Dendritic cell treated with granulocyte-macrophage colony-stimulating factor and Interleukin-4, amounts not matched to agents 40 ng/mL and 50 ng/mL, for 4 days (primary cell): ENCODE measurements at regions of chr18 and their contacts with region 1.

Region 1: DNA sequence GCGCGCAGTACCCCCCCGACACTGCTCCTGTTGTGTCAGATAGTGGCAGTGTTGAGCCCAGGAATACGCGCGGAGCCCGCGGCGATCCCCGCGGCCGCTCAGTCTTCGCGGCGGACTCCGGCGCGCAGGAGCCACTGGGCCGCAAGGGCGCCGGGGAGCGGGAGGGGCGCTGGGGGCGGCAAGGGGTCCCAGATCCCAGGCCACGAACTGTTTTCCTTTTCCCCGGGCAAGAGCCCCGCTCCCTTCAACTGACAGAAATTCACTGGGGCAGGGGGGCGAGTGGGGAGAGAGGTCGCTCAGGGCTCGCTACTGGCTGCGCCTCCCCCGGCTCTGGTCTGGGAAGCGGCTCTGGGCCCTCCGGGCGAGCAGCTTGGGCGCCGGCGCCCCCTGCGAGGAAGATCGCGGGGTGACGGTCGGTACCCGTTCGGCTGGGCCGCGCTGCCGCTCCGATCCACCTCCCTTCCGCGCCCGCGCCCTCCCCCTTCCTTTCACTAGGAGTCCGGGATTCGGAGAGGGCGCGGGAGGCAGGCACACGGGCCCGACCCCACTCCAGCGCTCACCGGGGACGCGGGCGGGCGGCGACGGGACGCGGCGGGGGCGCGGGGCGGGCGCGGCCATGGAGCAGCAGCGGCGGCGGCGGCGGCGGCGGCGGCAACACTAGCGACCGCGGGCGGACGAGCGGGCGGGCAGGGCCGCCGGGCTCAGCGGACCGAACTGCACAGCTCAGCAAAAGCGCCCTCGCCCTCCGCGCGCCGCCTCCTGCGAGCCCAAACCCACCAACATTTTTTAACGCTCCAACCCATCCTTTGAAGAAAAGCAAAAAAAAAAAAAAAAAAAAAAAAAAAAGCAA is 1.4 kb upstream of the SETBP1 start:
- H3K4me3 Mint-ChIP-seq: peak overlapping the region; percentile 76
- H3K27ac Mint-ChIP-seq: peak overlapping the region; percentile 52
- H3K4me1 Mint-ChIP-seq: no peaks in the 10 kb centered on the region
- H3K27me3 Mint-ChIP-seq: peaks cover 23% of the 10 kb centered on the region

Region 2: GRCh38 chr18:43442571-43442970 is 1236.7 kb before region 1 on chr18:
- intact Hi-C with region 1: no loop called
- H3K4me3 Mint-ChIP-seq: no peak overlapping the region
- H3K27ac Mint-ChIP-seq: no peak overlapping the region
- H3K4me1 Mint-ChIP-seq: no peaks in the 10 kb centered on the region
- H3K27me3 Mint-ChIP-seq: no peaks in the 10 kb centered on the region

Region 3: DNA sequence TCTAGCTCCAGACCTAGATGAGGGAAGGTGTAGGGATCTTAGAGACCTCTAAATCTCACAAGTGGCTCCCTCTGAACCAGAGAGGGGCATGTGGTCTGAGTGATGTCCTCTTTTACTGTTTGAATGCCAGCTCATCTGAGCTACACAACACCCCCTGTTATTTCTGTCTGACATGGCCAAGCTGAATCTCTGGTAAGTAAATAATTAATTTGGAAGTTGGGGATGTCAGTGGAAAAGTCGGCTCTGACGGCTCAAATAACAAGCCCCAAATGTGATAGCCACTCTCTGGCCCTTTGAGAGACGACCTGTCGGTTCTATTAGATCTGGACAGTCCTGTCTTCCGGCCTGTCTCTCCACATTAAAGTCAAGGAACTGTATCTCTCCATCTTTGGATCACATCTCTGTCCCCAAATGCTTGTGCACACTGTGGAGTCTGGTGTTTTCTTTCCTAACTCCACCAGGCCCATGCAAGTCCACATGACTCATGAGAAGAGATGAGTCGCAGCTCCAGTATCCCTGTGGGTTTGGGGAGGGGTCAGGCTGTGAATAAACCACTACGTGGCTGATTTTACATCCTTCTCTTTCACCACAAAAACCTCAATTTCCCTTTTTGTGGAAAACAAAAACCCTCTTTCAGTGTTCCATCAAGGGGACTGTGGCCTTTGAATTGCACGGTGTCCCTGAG is 53.9 kb after region 1 on chr18:
- intact Hi-C with region 1: loop called (anchors 10 kb)
- H3K4me3 Mint-ChIP-seq: no peak overlapping the region
- H3K27ac Mint-ChIP-seq: no peak overlapping the region
- H3K4me1 Mint-ChIP-seq: peaks cover 60% of the 10 kb centered on the region
- H3K27me3 Mint-ChIP-seq: peaks cover 93% of the 10 kb centered on the region

Region 4: GRCh38 chr18:44789710-44790109 is 110.4 kb after region 1 on chr18:
- intact Hi-C with region 1: loop called (anchors 5 kb)
- H3K4me3 Mint-ChIP-seq: peak overlapping the region; percentile 20
- H3K27ac Mint-ChIP-seq: peak overlapping the region; percentile 70
- H3K4me1 Mint-ChIP-seq: peaks cover 18% of the 10 kb centered on the region
- H3K27me3 Mint-ChIP-seq: peaks cover 64% of the 10 kb centered on the region